A673 (cell line): ENCODE measurements at regions of chr14 and their contacts with region 1.

Region 1: DNA sequence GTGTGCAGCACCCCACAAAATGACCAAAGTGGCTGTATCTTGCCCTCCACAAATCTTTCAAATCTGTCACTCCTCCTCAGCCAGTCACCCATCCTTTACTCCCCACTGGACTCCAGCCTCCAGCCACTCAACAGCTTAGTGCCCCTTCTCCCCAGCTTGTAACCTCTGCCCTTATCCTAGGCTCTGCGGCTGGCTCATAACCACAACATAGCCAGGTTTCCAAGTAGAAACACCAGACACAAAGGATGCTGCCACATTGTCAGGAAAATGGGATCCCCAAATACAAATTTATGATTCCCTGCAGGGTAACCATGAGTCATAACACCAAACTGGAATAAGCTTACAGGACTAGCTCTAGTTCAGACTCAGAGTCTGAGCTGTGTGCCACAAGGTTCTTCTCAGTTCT is 15.1 kb downstream of the OXA1L start:
- DNase-seq: peak; percentile 32
- H3K4me3 ChIP-seq: no peak overlapping the region
- H3K27ac ChIP-seq: peak overlapping the region; percentile 68
- H3K4me1 ChIP-seq: peaks cover 4% of the 10 kb centered on the region
- H3K27me3 ChIP-seq: no peaks in the 10 kb centered on the region
- CTCF ChIP-seq: no peak

Region 2: GRCh38 chr14:22753586-22753985 is 28.0 kb before region 1 on chr14:
- CTCF ChIA-PET with region 1: no interaction called
- POLR2A ChIA-PET with region 1: interaction called, 14 read pairs
- intact Hi-C with region 1: no loop called
- DNase-seq: peak; percentile 33
- H3K4me3 ChIP-seq: no peak overlapping the region
- H3K27ac ChIP-seq: no peak overlapping the region
- H3K4me1 ChIP-seq: no peaks in the 10 kb centered on the region
- H3K27me3 ChIP-seq: no peaks in the 10 kb centered on the region
- CTCF ChIP-seq: no peak